Activated CD8-positive, alpha-beta T cell treated with anti-CD3 and anti-CD28 coated beads for 36 hours (primary cell): ENCODE measurements at regions of chr9 and their contacts with region 1.

Region 1: GRCh38 chr9:129889941-129890717 is 54.9 kb downstream of the USP20 start:
- DNase-seq: peak; percentile 92
- ATAC-seq: peak; percentile 6
- H3K4me3 Mint-ChIP-seq: peak overlapping the region; percentile 92
- H3K27ac Mint-ChIP-seq: peak overlapping the region; percentile 99
- H3K4me1 Mint-ChIP-seq: peaks cover 66% of the 10 kb centered on the region
- H3K27me3 Mint-ChIP-seq: no peaks in the 10 kb centered on the region
- CTCF ChIP-seq: no peak

Region 2: GRCh38 chr9:128875790-128876160 is 1014.4 kb before region 1 on chr9:
- CTCF ChIA-PET with region 1: no interaction called
- POLR2A ChIA-PET with region 1: no interaction called
- intact Hi-C with region 1: no loop called
- DNase-seq: no peak
- ATAC-seq: no peak
- H3K4me3 Mint-ChIP-seq: no peak overlapping the region
- H3K27ac Mint-ChIP-seq: no peak overlapping the region
- H3K4me1 Mint-ChIP-seq: peaks cover 14% of the 10 kb centered on the region
- H3K27me3 Mint-ChIP-seq: no peaks in the 10 kb centered on the region
- CTCF ChIP-seq: no peak

Region 3: DNA sequence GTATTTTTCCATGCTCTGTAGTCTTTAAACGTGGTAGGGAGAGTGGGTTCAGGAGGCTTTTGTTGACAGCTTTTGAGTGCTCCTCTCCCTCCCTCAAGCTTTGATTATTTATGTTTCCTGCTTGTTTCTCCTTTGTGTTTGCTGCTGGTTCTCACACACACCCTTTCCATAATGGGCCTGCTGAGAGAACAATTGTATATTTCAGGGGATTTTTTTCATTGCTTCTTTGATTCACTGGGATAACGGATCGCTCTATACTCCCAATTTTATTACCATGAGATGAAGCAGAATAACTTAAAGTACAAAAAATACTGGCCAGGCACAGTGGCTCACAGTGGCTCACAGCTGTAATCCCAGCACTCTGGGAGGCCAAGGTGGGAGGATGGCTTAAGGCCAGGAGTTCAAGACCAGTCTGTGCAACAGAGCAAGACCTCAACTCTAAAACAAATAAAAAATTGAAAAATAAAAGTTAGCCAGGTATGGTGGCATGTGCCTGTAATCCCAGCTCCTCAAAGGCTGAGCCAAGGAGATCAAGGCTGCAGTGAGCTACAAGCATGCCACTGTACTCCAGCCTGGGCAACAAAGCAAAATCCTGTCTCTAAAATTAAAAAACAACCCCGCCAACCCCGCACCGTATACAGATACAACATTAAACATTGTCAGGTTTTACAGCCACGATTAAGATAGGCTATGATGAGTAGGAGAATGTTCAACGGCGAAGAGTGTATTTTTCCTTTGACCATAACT is 12.0 kb after region 1 on chr9:
- CTCF ChIA-PET with region 1: interaction called, 7 read pairs
- POLR2A ChIA-PET with region 1: interaction called, 18 read pairs
- intact Hi-C with region 1: no loop called
- DNase-seq: no peak
- ATAC-seq: no peak
- H3K4me3 Mint-ChIP-seq: no peak overlapping the region
- H3K27ac Mint-ChIP-seq: peak overlapping the region; percentile 77
- H3K4me1 Mint-ChIP-seq: peaks cover 51% of the 10 kb centered on the region
- H3K27me3 Mint-ChIP-seq: no peaks in the 10 kb centered on the region
- CTCF ChIP-seq: no peak